ENCODE measurements at regions of chr2 and their contacts with region 1.

Region 1: GRCh38 chr2:149422339-149423309 is 92.2 kb downstream of the LYPD6 start:
- DNase-seq: no peak

Region 2: DNA sequence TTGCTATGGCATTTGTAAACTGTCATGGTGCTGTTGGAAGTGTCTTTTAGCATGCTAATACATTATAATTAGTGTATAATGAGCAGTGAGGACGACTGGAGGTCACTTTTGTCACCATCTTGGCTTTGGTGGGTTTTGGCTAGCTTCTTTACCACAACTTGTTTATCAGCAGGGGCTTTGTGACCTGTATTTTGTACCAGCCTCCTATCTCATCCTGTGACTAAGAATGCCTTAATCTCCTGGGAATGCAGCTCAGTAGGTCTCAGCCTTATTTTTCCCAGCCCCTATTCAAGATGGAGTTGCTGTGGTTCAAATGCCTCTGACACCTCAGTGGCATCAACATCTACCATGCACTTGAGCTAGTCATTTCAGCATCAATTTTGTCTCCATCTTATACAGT is 62.5 kb before region 1 on chr2:
- intact Hi-C with region 1: no loop called
- DNase-seq: no peak

Region 3: DNA sequence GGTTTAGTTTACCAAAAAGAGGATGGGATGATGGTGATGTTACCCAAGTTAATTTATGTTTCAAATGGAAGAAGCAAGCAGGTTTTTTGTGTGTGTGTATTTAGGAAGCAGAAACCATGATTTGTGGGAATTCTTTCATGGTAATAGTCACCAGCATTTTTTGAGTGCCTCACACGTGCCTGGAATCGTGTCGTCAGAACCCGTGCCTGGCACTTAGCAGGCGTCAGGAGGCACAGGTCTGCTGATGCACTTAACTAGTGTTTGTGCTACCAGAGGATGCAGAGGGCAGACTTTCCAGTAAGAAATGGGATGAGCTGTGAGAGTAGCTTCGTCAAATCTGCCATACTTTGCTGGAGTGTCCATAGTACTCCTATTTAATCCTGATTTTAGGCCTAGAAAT is 51.1 kb before region 1 on chr2:
- intact Hi-C with region 1: loop called in 1 of 2 experiments (anchors 1 kb)
- DNase-seq: no peak

Region 4: DNA sequence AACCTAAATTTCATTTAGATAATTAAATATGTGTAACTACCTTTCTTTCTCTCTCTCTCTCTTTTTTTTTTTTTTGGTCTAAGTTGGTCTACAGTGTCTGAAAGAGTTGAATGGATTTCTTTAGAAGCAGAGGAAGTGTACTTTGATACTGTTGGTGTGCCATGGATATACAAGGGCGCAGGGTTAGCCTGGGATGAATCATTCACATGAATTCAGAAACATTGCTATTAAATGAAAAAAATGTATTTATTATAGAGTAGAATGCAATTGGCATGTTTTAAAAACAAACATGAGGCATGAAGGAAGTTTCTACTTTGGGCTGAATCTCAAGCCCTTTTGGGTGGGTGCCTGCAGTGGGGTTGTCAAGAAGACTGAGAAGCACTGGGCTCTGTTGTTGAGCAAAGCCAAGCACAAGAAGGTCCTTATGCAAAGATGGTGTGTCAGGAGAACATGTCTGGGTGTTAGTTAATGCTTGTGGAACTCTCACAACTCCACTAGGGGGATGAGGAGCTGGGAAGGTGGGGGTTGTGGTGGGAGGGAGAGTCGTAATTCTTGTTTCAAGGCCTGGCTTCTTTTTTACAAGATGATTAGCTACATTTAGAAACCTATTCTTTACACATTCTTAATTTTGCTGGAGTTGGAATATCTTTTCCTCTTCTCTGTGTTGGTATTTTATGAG is 34.4 kb before region 1 on chr2:
- intact Hi-C with region 1: no loop called
- DNase-seq: no peak